Cardiac septum (tissue), 1 donor: ENCODE measurements at regions of chr5 and their contacts with region 1.

Region 1: DNA sequence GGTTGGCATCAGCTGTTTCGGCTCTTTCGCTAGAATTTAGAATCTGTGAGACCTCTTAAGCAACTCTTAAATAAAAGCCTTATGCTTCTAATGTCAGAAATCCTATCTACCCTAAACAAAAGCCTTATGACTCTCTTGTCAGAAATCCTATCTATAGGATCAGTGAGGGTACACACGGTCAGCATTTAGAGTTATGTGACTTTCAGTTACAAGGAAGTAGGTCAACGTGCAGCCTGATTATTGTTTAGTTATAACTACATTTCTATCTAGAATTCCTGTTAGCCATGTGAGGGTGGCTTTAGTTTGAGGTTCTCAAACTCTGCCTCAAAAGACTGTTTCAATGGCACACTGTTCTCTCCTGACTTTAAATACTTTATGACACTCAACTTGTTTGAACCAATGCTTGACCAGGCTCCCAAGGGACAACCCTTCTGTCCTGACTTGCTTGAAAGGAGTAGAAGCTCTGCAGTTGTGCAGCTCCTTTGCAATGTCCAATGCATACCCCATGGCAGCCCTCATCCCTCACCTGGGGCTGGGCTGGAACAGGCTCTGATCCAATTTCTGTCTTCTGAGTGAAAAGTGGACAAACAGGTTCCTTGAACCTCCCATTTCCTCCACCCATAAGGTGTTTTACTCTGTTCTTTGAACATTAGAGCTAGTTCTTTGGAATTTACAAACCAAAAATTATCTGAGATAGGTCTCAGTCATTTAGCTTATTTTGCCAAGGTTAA is 251.6 kb upstream of the PIK3R1 start:
- DNase-seq: no peak

Region 2: DNA sequence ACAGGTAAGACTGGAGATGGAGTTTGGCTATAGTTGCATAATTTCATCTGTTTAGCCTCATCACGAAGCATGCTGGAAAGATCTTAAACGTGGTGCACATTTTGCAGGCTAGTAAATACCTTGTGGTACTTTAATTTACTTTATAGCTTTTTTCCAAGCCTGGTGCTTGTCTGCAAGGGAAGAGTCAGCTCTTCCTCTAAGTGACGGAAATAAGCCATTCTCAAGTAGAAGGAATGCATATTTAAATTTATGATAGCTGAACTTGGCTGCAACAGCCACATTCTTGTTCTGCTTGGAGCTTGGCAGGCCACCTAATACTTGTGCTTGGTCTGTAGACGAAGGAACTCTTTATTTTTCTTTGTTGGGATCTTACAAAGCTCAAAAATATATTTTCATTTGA is 63.6 kb after region 1 on chr5:
- intact Hi-C with region 1: loop called (anchors 5 kb)
- DNase-seq: no peak

Region 3: GRCh38 chr5:68456756-68457217 is 492.8 kb after region 1 on chr5:
- intact Hi-C with region 1: no loop called
- DNase-seq: no peak